SK-N-SH (cell line): ENCODE measurements at regions of chr12 and their contacts with region 1.

Region 1: GRCh38 chr12:97482143-97482693 is 19.6 kb downstream of the RMST start:
- DNase-seq: no peak
- H3K4me3 ChIP-seq: no peak overlapping the region
- H3K27ac ChIP-seq: no peak overlapping the region
- H3K4me1 ChIP-seq: no peaks in the 10 kb centered on the region
- H3K27me3 ChIP-seq: no peaks in the 10 kb centered on the region
- CTCF ChIP-seq: no peak
- EP300 ChIP-seq: no peak
- RAD21 ChIP-seq: no peak

Region 2: DNA sequence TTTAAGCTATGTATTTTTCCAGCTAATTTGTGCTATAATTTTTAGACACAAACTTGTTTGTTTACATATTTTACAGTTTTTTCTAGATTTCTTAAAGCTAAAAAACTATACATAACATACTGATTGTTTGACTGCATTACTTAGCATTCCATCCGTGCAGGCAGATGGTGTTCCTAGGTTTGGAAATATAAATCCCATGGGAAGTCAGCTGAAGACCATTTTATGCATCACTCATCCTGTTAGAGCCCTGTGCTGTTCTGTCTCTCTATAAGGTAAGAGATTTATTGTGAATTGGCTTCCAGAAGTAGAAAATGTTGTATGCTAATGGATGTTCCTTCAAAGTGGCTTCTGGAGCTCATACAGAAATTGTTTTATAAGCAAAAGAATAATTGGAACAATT is 11.5 kb after region 1 on chr12:
- CTCF ChIA-PET with region 1: interaction called, 11 read pairs
- POLR2A ChIA-PET with region 1: no interaction called
- DNase-seq: no peak
- H3K4me3 ChIP-seq: no peak overlapping the region
- H3K27ac ChIP-seq: no peak overlapping the region
- H3K4me1 ChIP-seq: no peaks in the 10 kb centered on the region
- H3K27me3 ChIP-seq: no peaks in the 10 kb centered on the region
- CTCF ChIP-seq: no peak
- EP300 ChIP-seq: no peak
- RAD21 ChIP-seq: no peak